CD8-positive, alpha-beta memory T cell (primary cell): ENCODE measurements at regions of chr20 and their contacts with region 1.

Region 1: DNA sequence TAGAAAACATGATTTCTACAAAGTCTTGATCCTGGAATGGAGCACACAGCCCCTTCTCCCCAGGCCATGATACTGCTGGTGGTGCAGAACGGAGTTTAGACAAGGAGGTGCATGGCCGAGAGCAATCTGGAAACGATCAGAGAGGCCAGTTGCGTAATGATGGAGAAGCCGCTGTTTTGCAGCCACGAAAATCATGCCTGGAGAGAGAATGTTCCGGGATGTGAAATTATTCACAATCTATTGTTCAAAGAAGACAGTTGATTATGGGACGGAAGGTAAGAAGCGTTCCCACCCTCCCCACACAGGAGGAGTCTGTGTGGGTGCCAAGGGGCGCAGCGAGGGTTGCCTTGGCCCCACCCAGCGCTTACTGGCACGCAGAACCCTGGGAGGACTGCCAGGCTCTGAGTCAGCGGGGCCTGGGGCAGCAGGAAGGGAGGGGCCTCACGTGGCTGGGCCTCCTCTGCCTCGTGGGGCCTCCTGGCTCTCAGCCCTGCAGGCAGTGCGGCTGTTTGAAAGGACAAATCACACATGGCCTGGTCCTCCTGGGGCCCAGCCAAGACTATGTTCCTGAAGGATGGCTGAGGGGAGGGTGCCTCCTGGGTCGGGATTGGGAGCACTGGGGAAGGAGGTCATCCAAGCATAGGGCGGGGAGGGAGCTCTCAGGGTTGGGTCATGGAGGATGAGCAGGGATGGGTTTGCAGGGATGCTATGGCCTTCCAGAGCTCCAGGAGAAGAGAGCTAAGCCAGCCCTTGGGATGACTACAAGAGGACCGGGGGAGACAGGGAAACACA is 8.7 kb upstream of the AP5S1 start:
- DNase-seq: peak; percentile 86 to 97 (median 92)
- H3K4me3 ChIP-seq: peak overlapping the region; percentile 52
- H3K4me3 Mint-ChIP-seq: peak overlapping the region; percentile 88 to 94 (median 93)
- H3K27ac ChIP-seq: peak overlapping the region; percentile 66
- H3K27ac Mint-ChIP-seq: peak overlapping the region; percentile 97 to 100 (median 100)
- H3K4me1 ChIP-seq: peaks cover 80% of the 10 kb centered on the region
- H3K4me1 Mint-ChIP-seq: peaks cover 73 to 85% (median 80%) of the 10 kb centered on the region in 3 donors
- H3K27me3 ChIP-seq: no peaks in the 10 kb centered on the region
- H3K27me3 Mint-ChIP-seq: no peaks in the 10 kb centered on the region

Region 2: DNA sequence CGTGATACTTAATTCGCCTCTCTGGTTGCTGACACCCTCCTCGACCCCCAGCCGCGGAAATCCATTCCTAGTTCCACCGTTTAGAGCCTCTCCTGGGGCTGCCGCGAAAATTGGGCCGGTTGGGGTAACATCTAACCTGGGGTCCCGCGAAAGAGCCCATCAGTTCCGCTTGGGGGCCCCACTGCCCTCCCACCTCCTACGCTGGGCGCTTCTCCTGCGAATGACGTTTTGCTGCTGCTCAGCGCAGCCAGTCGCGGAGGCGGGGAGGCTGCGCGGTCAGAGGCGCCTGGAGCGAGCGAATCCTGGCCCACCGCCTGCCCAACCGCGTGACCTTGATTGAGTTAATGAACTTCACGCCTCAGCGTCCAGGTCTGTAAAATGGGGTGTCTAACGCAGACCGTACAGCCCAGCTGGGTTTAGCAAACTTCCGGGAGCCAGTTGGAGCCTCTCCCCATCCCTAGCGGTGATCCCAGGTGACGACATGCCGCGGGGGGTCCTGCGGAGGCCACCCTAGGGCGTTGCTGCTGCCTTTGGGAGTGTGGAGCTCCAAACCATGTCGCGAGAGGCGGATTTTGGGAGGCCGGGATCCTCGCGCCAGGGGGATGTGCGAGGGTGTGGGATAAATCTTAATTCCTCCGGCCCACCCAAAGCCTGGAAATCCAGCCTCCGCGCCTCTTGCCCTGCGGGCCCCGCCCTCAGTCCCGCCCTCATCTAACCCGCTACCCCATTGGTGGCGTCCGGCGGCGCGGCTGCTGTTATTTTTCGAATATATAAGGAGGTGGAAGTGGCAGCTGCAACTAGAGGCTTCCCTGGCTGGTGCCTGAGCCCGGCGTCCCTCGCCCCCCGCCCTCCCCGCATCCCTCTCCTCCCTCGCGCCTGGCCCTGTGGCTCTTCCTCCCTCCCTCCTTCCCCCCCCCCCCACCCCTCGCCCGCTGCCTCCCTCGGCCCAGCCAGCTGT is 15.9 kb before region 1 on chr20 and contains the start of gene CDC25B:
- CTCF ChIA-PET with region 1: interaction called, 262 read pairs
- POLR2A ChIA-PET with region 1: interaction called, 20 read pairs
- DNase-seq: peak; percentile 81 to 92 (median 88)
- H3K4me3 ChIP-seq: peak within 1 kb of the TSS; percentile 92
- H3K4me3 Mint-ChIP-seq: peak within 1 kb of the TSS; percentile 94 to 100 (median 98)
- H3K27ac ChIP-seq: peak within 1 kb of the TSS; percentile 89
- H3K27ac Mint-ChIP-seq: peak within 1 kb of the TSS; percentile 94 to 99 (median 96)
- H3K4me1 ChIP-seq: peaks cover 38% of the 10 kb centered on the region
- H3K4me1 Mint-ChIP-seq: peaks cover 39 to 47% (median 45%) of the 10 kb centered on the region in 3 donors
- H3K27me3 ChIP-seq: no peaks in the 10 kb centered on the region
- H3K27me3 Mint-ChIP-seq: peaks cover 0 to 3% of the 10 kb centered on the region in 2 donors
- total RNA-seq, gene CDC25B: 78.0 to 81.6 TPM